Activated CD4-positive, alpha-beta T cell treated with anti-CD3 and anti-CD28 coated beads for 36 hours (primary cell): ENCODE measurements at regions of chr11 and their contacts with region 1.

Region 1: GRCh38 chr11:75388386-75389275 is 10.7 kb upstream of the RPS3 start:
- DNase-seq: peak; percentile 83
- ATAC-seq: peak; percentile 92
- H3K4me3 Mint-ChIP-seq: no peak overlapping the region
- H3K27ac Mint-ChIP-seq: no peak overlapping the region
- H3K4me1 Mint-ChIP-seq: peaks cover 10% of the 10 kb centered on the region
- H3K27me3 Mint-ChIP-seq: peaks cover 4% of the 10 kb centered on the region

Region 2: GRCh38 chr11:75270896-75271418 is 117.7 kb before region 1 on chr11:
- CTCF ChIA-PET with region 1: interaction called, 279 read pairs
- POLR2A ChIA-PET with region 1: no interaction called
- intact Hi-C with region 1: no loop called
- DNase-seq: no peak
- ATAC-seq: no peak
- H3K4me3 Mint-ChIP-seq: no peak overlapping the region
- H3K27ac Mint-ChIP-seq: no peak overlapping the region
- H3K4me1 Mint-ChIP-seq: peaks cover 25% of the 10 kb centered on the region
- H3K27me3 Mint-ChIP-seq: no peaks in the 10 kb centered on the region

Region 3: DNA sequence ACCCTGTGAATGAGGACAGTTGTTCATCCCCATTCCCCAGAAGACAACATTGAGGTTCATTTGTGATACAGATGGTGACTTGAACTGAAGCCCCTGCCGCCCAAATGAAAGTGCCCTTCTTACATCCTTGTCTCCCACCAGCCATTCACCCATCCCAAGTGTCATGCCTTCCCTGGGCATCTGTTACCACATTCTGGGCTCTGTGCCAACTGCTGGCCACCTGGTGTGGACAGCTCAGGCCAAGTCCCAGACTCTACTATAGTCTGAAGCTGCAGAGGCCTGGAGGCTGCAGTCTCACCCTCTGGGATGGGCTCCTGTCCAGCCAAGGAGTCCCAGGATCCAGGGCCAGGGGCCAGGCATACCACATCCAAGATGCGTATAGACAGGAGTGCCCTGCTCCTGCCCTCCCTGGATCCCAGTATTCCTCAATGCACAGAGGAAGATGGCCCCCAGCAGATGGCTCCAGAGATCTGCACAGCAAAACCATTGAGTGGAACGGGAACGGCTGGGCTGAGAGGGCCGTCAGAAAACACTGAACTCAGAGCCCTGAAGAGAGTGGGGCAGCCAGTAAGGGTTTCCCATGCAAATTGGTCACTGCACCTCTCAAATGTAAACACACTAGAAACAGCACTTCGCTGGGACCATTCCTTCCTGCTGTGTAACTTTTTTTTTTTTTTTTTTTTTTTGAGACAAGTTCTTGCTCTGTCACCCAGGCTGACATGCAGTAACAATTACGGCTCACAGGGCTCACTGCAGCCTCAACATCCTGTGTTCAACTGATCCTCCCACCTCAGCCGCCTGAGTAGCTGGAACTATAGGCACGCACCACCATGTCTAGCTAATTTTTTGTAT is 60.0 kb before region 1 on chr11:
- CTCF ChIA-PET with region 1: interaction called, 10 read pairs
- POLR2A ChIA-PET with region 1: interaction called, 8 read pairs
- intact Hi-C with region 1: loop called (anchors 1 kb)
- DNase-seq: peak; percentile 77
- ATAC-seq: peak; percentile 76
- H3K4me3 Mint-ChIP-seq: no peak overlapping the region
- H3K27ac Mint-ChIP-seq: peak overlapping the region; percentile 52
- H3K4me1 Mint-ChIP-seq: peaks cover 67% of the 10 kb centered on the region
- H3K27me3 Mint-ChIP-seq: no peaks in the 10 kb centered on the region

Region 4: DNA sequence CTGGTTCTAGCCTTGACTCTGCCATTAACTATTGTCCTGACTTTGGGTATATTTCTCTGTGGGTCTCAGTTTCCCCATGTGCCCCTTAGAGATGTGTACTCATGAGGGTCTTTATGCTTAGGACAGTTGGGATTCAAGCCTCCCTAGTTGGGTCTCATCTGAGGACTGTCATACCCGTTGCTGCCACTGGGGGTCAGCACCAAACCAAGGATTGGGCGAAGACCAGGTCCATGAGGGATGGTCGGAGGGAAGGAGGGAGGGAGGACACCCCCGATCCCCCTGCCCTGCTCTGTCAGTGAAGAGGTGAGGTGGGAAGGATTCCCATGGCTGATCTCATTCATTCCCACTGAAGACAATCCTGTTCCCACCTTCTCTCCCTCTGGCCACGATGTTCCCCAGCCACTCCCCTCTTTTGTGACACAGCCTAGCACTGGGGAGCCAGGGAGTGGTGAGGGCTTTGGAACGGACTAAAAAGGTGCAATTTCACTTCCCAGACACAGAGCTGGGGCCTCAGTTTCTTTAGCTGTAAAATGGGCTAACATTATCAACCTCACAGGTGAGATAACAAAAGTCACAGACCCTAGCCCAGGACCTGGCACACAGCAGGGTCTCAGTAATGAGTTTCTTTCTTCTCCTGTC is 56.8 kb after region 1 on chr11:
- CTCF ChIA-PET with region 1: interaction called, 7 read pairs
- POLR2A ChIA-PET with region 1: no interaction called
- intact Hi-C with region 1: loop called in 1 of 2 experiments (anchors 1 kb)
- DNase-seq: peak; percentile 84
- ATAC-seq: peak; percentile 87
- H3K4me3 Mint-ChIP-seq: no peak overlapping the region
- H3K27ac Mint-ChIP-seq: no peak overlapping the region
- H3K4me1 Mint-ChIP-seq: no peaks in the 10 kb centered on the region
- H3K27me3 Mint-ChIP-seq: no peaks in the 10 kb centered on the region

Region 5: DNA sequence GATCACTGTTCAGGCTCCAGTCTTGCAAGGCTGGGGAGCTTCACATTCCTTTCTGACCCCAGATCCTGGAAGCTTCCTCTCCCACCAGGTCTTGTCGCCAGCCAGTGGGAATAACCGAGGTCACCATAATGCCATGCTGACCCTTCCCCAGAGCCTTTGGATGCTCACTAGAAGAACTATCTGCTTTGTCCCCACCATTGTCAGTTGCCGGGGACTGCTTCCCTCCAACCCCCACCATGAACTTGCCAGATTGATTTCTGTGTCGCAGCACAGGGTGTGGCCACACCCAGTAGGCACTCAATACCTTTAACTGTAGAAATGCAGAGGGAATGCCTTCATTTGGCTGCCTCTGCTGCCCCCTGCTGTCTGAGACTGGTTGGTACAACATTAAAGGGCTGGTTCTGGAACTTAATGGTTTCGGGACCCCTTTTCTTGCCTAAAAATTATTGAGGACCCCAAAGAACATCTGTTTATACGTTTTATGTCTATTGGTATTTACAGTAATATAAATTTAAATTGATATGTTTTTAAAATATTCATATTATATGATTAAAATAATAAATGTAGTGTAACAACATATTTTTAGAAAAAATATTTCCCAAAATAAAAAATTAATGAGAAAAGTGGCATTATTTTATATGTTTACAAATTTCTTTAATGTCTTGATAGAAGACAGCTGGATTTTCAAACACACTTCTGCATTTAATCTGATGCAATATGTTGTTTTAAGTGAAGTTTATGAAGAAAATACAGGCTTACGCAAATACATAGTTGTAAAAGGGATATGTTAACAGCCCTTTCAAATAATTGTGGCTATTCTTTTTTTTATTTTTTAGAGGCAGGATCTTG is 143.8 kb after region 1 on chr11:
- CTCF ChIA-PET with region 1: interaction called, 58 read pairs
- POLR2A ChIA-PET with region 1: no interaction called
- intact Hi-C with region 1: loop called (anchors 1 kb)
- DNase-seq: peak; percentile 89
- ATAC-seq: peak; percentile 68
- H3K4me3 Mint-ChIP-seq: no peak overlapping the region
- H3K27ac Mint-ChIP-seq: no peak overlapping the region
- H3K4me1 Mint-ChIP-seq: peaks cover 26% of the 10 kb centered on the region
- H3K27me3 Mint-ChIP-seq: no peaks in the 10 kb centered on the region